ENCODE measurements at regions of chr12 and their contacts with region 1.

Region 1: DNA sequence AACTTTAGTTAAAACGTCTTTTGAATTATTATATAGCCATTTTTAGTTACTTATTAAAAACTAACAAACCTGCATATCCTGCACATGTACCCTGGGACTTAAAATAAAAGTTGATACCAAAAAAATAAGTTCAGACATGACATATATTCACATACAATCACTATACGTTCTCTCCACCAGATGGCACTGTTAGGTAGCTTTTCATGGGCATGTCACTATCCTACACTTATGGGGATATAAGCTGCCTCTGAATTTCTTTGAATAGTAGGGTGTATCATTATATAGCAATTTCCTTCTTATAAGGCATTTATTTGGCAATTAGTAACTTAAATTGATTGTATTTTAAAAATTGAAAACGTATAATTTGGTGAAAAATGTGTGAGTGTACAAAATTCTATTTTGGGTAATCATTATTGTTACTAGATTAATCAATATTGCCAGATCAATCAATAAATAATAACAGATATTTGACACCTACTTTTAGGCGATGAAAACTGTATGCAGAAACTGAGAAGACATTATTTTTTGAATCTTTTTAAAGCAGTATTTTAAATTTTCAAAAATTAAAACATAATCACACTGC is 31.8 kb upstream of the OR10A7 start:
- DNase-seq: peak in 5 of 9 experiments; percentile 16 to 79 (median 44)
- ATAC-seq: peak; percentile 73
- H3K4me3 ChIP-seq: no peak overlapping the region
- H3K4me3 Mint-ChIP-seq: no peak overlapping the region
- H3K27ac ChIP-seq: no peak overlapping the region
- H3K27ac Mint-ChIP-seq: no peak overlapping the region
- H3K4me1 ChIP-seq: no peaks in the 10 kb centered on the region
- H3K4me1 Mint-ChIP-seq: no peaks in the 10 kb centered on the region
- H3K27me3 ChIP-seq: peaks cover 3% of the 10 kb centered on the region in 2 experiments
- H3K27me3 Mint-ChIP-seq: peaks cover 35% of the 10 kb centered on the region
- CTCF ChIP-seq: peak; percentile 93

Region 2: DNA sequence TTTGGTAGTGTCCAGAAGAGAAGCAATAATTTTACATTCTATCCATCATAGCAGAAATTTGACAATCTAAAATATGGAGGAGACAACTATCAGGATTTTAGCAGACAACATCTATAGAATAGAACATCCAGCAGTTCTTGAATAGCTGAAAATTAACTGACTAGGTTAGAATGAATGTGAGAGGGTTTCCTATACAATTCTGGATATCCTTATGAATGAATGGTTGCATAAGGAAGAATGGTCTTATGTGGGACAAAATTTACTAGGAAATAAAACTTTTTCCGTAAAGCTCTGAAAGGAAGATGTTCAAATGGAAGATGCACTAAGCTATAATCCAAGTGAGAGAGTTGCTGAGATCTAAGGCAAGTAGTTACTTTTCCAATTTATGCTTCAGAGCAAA is 141.4 kb after region 1 on chr12 and contains the start of gene OR6C3:
- CTCF ChIA-PET with region 1: no interaction called
- POLR2A ChIA-PET with region 1: no interaction called
- intact Hi-C with region 1: no loop called
- DNase-seq: no peak
- ATAC-seq: no peak
- H3K4me3 ChIP-seq: no peak within 1 kb of the TSS
- H3K4me3 Mint-ChIP-seq: no peak within 1 kb of the TSS
- H3K27ac ChIP-seq: no peak within 1 kb of the TSS
- H3K27ac Mint-ChIP-seq: no peak within 1 kb of the TSS
- H3K4me1 ChIP-seq: no peaks in the 10 kb centered on the region
- H3K4me1 Mint-ChIP-seq: no peaks in the 10 kb centered on the region
- H3K27me3 ChIP-seq: peaks cover 0 to 4% of the 10 kb centered on the region in 2 experiments
- H3K27me3 Mint-ChIP-seq: peaks cover 25% of the 10 kb centered on the region
- CTCF ChIP-seq: no peak
- total RNA-seq, gene OR6C3: not detected

Region 3: GRCh38 chr12:55619354-55620138 is 430.5 kb after region 1 on chr12:
- CTCF ChIA-PET with region 1: interaction called, 8 read pairs
- POLR2A ChIA-PET with region 1: no interaction called
- intact Hi-C with region 1: loop called in 1 of 2 experiments (anchors 1 kb)
- DNase-seq: peak in 6 of 9 experiments; percentile 4 to 83 (median 42)
- ATAC-seq: peak; percentile 96
- H3K4me3 ChIP-seq: no peak overlapping the region
- H3K4me3 Mint-ChIP-seq: no peak overlapping the region
- H3K27ac ChIP-seq: no peak overlapping the region
- H3K27ac Mint-ChIP-seq: no peak overlapping the region
- H3K4me1 ChIP-seq: no peaks in the 10 kb centered on the region
- H3K4me1 Mint-ChIP-seq: peaks cover 2% of the 10 kb centered on the region
- H3K27me3 ChIP-seq: no peaks in the 10 kb centered on the region
- H3K27me3 Mint-ChIP-seq: peaks cover 22% of the 10 kb centered on the region
- CTCF ChIP-seq: peak; percentile 86